ENCODE measurements at regions of chr14 and their contacts with region 1.

Region 1: GRCh38 chr14:97978341-97978740 is 1181.2 kb downstream of the VRK1 start:
- DNase-seq: peak; percentile 93
- ATAC-seq: peak; percentile 87
- H3K4me3 Mint-ChIP-seq: peak overlapping the region; percentile 94
- H3K27ac Mint-ChIP-seq: peak overlapping the region; percentile 95
- H3K4me1 Mint-ChIP-seq: peaks cover 63% of the 10 kb centered on the region
- H3K27me3 Mint-ChIP-seq: no peaks in the 10 kb centered on the region

Region 2: GRCh38 chr14:97707603-97708002 is 270.7 kb before region 1 on chr14:
- CTCF ChIA-PET with region 1: interaction called, 3 read pairs
- POLR2A ChIA-PET with region 1: no interaction called
- intact Hi-C with region 1: loop called in 1 of 2 experiments (anchors 5 kb)
- DNase-seq: peak; percentile 39
- ATAC-seq: peak; percentile 32
- H3K4me3 Mint-ChIP-seq: no peak overlapping the region
- H3K27ac Mint-ChIP-seq: no peak overlapping the region
- H3K4me1 Mint-ChIP-seq: peaks cover 96% of the 10 kb centered on the region
- H3K27me3 Mint-ChIP-seq: no peaks in the 10 kb centered on the region

Region 3: DNA sequence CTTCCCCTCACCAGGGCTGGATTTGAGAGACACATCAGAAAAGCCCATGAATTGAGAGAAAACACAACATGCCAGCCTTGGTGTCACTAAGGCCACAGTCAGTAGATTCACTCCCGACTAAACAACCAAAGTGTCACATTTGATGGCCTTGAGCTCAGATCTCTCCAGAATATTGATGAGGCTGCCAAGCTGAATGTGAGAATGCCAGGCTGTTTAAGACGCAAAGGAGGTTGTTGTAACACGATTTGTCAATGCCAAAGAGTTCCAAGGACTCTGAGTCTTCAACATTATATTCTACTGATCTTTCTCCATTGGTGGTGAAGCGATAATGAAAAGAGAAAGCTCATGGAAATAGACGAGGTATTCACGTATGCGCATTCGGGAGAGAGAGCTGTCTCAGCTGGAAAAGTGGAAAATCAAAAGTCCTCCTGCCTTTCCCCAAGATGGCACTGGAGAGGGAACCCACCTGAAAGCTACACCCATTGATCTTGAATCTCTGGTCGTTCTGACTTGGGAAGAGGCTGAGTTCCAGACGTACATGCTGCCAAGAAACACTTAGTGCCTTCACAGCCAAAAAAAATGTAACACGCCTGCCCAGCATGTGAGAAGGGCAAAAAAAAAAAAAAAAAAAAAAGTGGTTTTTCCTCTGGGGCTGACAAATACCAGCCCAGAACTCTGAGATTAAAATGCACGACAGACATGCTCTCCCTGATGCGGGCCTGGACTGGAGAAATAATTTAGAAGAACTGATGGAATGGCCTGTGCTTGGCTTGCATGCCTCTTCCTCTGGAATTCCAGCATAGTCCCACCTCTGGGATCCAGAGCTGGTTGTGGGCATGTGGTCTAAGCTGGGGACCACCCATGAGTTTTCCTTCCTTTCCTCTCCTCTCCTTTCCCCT is 21.5 kb before region 1 on chr14:
- CTCF ChIA-PET with region 1: no interaction called
- POLR2A ChIA-PET with region 1: no interaction called
- intact Hi-C with region 1: no loop called
- DNase-seq: no peak
- ATAC-seq: no peak
- H3K4me3 Mint-ChIP-seq: no peak overlapping the region
- H3K27ac Mint-ChIP-seq: no peak overlapping the region
- H3K4me1 Mint-ChIP-seq: peaks cover 11% of the 10 kb centered on the region
- H3K27me3 Mint-ChIP-seq: no peaks in the 10 kb centered on the region

Region 4: DNA sequence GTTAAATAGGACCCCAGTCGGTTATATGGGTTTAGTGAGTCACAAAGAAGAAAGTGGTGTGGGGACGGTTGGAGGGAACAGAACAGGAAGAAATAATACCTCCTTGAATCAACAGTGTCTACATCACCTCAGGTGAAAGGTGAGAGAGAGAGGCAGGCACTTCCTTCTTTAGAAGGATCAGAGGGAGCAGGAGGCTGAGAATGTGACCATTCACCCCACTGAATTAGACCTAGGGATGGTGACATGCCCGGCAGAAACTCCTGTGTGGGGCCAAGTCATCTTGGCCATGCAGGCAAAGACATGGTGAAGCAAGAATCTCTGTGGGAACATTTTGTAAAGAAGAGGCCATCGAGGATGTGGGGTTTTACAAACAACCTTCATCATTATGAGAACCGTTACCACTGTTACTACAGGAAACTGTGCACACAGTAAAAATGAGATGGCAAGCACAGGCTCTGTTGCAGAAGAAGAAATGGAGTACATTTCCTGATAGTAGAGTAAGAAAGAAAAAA is 15.7 kb after region 1 on chr14:
- CTCF ChIA-PET with region 1: interaction called, 13 read pairs
- POLR2A ChIA-PET with region 1: interaction called, 8 read pairs
- intact Hi-C with region 1: loop called in 1 of 2 experiments (anchors 2 kb)
- DNase-seq: peak; percentile 52
- ATAC-seq: peak; percentile 81
- H3K4me3 Mint-ChIP-seq: peak overlapping the region; percentile 18
- H3K27ac Mint-ChIP-seq: peak overlapping the region; percentile 94
- H3K4me1 Mint-ChIP-seq: peaks cover 71% of the 10 kb centered on the region
- H3K27me3 Mint-ChIP-seq: no peaks in the 10 kb centered on the region

Region 5: DNA sequence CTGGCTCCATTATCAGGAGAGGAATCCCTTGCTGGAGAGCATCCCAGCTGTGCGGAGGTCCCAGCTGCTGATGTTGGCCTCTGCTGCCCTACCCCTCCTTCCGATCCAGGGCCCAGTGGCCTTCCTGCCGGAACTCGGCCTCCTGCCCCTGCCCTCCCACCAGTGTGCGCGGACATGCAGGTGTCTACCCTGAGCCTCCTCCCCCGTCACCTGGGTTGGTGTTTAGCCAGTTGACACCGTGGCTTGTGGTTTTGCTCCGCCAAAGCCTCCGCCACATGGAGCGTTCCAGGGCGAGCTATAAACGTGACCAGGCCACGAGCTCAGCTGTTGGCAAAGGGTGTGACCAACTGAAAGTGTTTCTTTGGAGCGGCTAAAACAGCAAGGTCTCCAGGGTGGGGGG is 189.4 kb after region 1 on chr14:
- CTCF ChIA-PET with region 1: interaction called, 8 read pairs
- POLR2A ChIA-PET with region 1: interaction called, 9 read pairs
- intact Hi-C with region 1: loop called (anchors 2 to 5 kb)
- DNase-seq: peak; percentile 50
- ATAC-seq: no peak
- H3K4me3 Mint-ChIP-seq: peak overlapping the region; percentile 31
- H3K27ac Mint-ChIP-seq: peak overlapping the region; percentile 99
- H3K4me1 Mint-ChIP-seq: peaks cover 92% of the 10 kb centered on the region
- H3K27me3 Mint-ChIP-seq: no peaks in the 10 kb centered on the region

Region 6: GRCh38 chr14:99192028-99192621 is 1213.8 kb after region 1 on chr14:
- CTCF ChIA-PET with region 1: no interaction called
- POLR2A ChIA-PET with region 1: no interaction called
- intact Hi-C with region 1: loop called (anchors 2 to 5 kb)
- DNase-seq: no peak
- ATAC-seq: peak; percentile 8
- H3K4me3 Mint-ChIP-seq: peak overlapping the region; percentile 79
- H3K27ac Mint-ChIP-seq: peak overlapping the region; percentile 99
- H3K4me1 Mint-ChIP-seq: peaks cover 89% of the 10 kb centered on the region
- H3K27me3 Mint-ChIP-seq: no peaks in the 10 kb centered on the region